Mammary epithelial cell (primary cell): ENCODE measurements at regions of chr15 and their contacts with region 1.

Region 1: GRCh38 chr15:50182219-50183013 is 420 bp downstream of the SLC27A2 start:
- DNase-seq: peak; percentile 47
- H3K4me3 ChIP-seq: peak overlapping the region; percentile 40 to 60 (median 46)
- H3K27ac ChIP-seq: no peak overlapping the region
- H3K4me1 ChIP-seq: peaks cover 11% of the 10 kb centered on the region
- H3K27me3 ChIP-seq: no peaks in the 10 kb centered on the region
- CTCF ChIP-seq: no peak

Region 2: GRCh38 chr15:50247819-50248655 is 65.6 kb after region 1 on chr15:
- CTCF ChIA-PET with region 1: no interaction called
- dilution Hi-C with region 1: no loop called
- in situ Hi-C with region 1: no loop called
- intact Hi-C with region 1: loop called (anchors 10 kb)
- DNase-seq: peak; percentile 78
- H3K4me3 ChIP-seq: no peak overlapping the region
- H3K27ac ChIP-seq: no peak overlapping the region
- H3K4me1 ChIP-seq: no peaks in the 10 kb centered on the region
- H3K27me3 ChIP-seq: no peaks in the 10 kb centered on the region
- CTCF ChIP-seq: no peak

Region 3: DNA sequence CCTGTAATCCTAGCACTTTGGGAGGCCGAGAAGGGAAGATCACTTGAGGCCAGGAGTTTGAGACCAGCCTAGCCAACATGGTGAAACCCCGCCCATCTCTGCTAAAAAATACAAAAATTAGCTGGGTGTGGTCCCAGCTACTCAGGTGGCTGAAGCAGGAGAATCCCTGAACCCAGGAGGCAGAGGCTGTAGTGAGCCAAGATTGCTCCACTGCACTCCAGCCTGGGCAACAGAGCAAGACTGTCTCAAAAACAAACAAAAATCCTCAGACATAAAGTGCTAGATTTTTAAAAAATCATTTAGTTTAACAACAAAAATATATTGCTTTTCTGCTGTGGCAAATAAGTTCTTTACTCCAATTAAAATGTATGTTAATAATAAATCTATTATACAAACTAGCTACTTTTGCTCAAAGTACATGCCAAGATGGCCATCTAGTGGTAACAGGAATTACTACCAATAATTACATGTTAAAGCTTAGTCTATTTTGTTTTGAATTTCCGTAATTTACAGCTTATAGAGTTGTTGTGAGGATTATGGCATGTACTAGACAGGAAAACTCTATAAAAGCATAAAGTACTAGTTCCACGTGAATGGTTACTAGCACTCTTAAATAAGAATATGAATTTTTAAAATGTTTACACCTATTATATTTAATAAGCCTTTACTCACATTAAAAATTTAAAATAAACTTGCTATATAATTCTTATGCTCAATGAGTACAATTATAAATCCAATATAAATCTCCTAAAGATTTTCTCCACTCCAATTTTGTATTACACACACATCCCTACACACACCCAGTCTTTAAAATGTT is 133.6 kb after region 1 on chr15:
- CTCF ChIA-PET with region 1: interaction called, 4 read pairs
- dilution Hi-C with region 1: no loop called
- in situ Hi-C with region 1: no loop called
- intact Hi-C with region 1: loop called (anchors 1 kb)
- DNase-seq: peak; percentile 22
- H3K4me3 ChIP-seq: no peak overlapping the region
- H3K27ac ChIP-seq: no peak overlapping the region
- H3K4me1 ChIP-seq: no peaks in the 10 kb centered on the region
- H3K27me3 ChIP-seq: no peaks in the 10 kb centered on the region
- CTCF ChIP-seq: peak; percentile 60 to 62

Region 4: DNA sequence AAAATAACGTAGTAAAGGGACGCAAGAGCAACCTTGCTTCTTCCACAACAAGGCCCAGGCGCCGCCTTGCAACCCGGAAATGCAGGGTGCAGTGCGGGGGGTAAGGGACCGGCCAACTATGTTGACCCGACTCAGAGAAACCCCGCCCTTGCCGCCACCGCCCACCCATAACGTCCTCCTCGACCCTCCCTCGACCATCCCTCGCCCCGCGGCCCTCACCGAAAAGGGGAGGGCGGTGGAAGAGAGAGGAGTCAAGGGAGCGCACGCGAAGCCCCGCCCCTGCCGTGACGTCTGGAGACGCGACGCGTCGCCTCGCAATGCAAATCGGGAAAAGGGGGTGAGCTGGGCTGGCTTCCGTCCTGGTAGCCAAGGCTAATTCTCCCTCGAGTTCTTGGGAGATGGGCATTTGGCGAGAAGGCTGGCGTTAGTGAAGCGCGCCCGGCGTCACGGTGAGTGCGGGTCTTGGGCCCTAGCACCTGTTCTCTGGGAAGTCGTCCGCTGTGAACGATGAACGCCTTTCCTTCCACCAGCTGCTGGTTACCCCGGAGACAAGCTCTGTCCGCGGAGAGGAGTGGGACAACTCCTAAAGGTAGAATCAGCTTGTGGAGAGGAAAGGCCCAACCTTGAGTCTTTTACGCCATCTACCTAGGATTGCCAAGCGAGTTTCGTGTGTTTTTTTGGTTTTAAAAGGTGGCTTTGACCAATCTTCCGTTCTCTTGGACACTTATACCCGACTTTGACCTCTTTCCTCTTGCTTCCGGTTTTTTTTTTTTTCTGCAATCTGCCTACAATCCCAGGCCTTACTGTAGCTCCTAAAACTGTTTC is 241.9 kb after region 1 on chr15 and contains the start of gene USP8:
- CTCF ChIA-PET with region 1: no interaction called
- dilution Hi-C with region 1: no loop called
- in situ Hi-C with region 1: no loop called
- intact Hi-C with region 1: loop called (anchors 10 kb)
- DNase-seq: peak; percentile 96
- H3K4me3 ChIP-seq: peak within 1 kb of the TSS; percentile 93 to 99 (median 94)
- H3K27ac ChIP-seq: peak within 1 kb of the TSS; percentile 93
- H3K4me1 ChIP-seq: peaks cover 9% of the 10 kb centered on the region
- H3K27me3 ChIP-seq: no peaks in the 10 kb centered on the region
- CTCF ChIP-seq: no peak
- total RNA-seq, gene USP8: 47.7 to 61.6 TPM